Activated CD4-positive, alpha-beta T cell treated with anti-CD3 and anti-CD28 coated beads for 36 hours (primary cell): ENCODE measurements at regions of chr1 and their contacts with region 1.

Region 1: DNA sequence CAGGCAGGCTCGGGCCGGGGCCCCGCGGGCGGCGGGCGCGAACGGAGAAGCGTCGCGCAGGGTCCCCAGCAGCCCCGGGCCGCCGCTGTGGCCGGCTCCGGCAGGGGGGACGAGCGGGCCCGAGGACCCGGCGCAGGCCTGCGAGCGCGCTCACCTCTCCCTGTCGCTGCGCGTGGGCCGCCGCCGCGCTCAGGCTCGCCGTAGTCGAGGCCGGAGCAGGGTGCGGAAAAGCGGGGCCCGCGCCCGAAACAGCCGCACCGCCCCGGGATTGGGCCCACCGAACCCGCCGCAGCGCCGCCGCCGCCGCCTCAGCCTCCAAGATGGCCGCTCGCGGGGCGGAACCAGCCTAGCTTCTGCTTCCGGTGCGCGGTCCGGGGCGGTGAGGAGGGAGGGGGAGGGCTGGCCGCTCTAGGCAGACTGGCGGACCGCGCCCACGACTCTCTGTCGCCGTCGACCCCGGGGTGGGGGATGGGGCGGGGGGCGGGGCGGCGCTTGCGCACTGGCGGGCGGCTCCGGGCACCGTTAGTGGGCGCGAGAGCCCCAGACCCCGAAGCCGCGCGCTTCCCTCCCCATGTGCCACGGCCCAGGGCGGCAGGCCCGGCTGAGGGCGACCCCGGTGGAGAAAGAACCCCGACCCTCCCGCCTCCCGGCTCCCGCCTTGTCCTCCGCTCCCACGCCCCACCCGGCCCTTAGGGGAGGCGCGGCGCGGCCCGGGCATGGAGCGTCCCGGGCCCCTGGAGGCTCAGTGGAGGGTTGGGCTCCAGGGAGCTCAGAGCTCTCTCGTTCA is at the start of gene UBE2J2:
- DNase-seq: peak; percentile 97
- ATAC-seq: peak; percentile 94
- H3K4me3 Mint-ChIP-seq: peak within 1 kb of the TSS; percentile 85
- H3K27ac Mint-ChIP-seq: peak within 1 kb of the TSS; percentile 83
- H3K4me1 Mint-ChIP-seq: peaks cover 36% of the 10 kb centered on the region
- H3K27me3 Mint-ChIP-seq: no peaks in the 10 kb centered on the region
- total RNA-seq, gene UBE2J2: 57.4 to 60.2 TPM

Region 2: GRCh38 chr1:1033009-1033587 is 240.6 kb before region 1 on chr1:
- CTCF ChIA-PET with region 1: no interaction called
- POLR2A ChIA-PET with region 1: no interaction called
- intact Hi-C with region 1: loop called in 1 of 2 experiments (anchors 1 kb)
- DNase-seq: peak; percentile 97
- ATAC-seq: peak; percentile 95
- H3K4me3 Mint-ChIP-seq: peak overlapping the region; percentile 33
- H3K27ac Mint-ChIP-seq: no peak overlapping the region
- H3K4me1 Mint-ChIP-seq: peaks cover 5% of the 10 kb centered on the region
- H3K27me3 Mint-ChIP-seq: peaks cover 18% of the 10 kb centered on the region

Region 3: DNA sequence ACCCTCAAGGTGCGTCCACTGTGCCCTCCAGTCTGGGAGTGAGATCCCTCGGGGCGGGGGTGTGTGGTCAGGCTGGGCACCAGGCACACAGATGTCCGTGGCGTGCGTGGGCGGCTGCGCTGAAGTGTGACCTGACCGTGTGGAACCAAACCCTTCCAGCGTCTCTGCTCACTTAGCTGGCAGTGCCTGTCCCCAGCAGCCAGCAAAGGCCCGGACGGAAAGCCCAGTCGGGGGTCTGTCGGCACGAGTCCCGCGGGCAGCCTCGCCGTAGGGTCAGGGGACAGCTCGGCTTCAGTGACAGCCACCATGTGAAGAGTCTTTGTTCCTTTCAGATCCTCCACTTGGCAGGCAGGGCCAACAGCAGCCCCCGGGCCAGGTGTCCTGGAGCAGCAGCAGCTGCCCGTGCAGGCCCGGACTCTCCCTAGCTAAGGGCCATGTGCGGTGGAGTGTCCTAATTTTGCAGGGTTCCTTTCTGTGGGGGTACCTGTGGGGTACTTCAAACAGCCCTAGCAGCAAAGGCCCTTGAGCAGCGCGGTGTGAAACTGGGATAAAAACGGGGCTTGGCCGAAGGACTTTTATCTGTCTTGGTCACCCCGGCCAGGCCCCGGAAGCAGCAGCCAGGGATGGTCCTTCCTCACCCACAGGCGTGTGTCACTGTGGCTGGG is 88.5 kb before region 1 on chr1:
- CTCF ChIA-PET with region 1: no interaction called
- POLR2A ChIA-PET with region 1: no interaction called
- intact Hi-C with region 1: no loop called
- DNase-seq: no peak
- ATAC-seq: no peak
- H3K4me3 Mint-ChIP-seq: no peak overlapping the region
- H3K27ac Mint-ChIP-seq: no peak overlapping the region
- H3K4me1 Mint-ChIP-seq: no peaks in the 10 kb centered on the region
- H3K27me3 Mint-ChIP-seq: peaks cover 2% of the 10 kb centered on the region

Region 4: GRCh38 chr1:1217621-1218523 is 55.8 kb before region 1 on chr1:
- CTCF ChIA-PET with region 1: no interaction called
- POLR2A ChIA-PET with region 1: interaction called, 4 read pairs
- intact Hi-C with region 1: loop called in 1 of 2 experiments (anchors 5 kb)
- DNase-seq: peak; percentile 77
- ATAC-seq: peak; percentile 4
- H3K4me3 Mint-ChIP-seq: peak overlapping the region; percentile 66
- H3K27ac Mint-ChIP-seq: peak overlapping the region; percentile 92
- H3K4me1 Mint-ChIP-seq: peaks cover 49% of the 10 kb centered on the region
- H3K27me3 Mint-ChIP-seq: no peaks in the 10 kb centered on the region

Region 5: DNA sequence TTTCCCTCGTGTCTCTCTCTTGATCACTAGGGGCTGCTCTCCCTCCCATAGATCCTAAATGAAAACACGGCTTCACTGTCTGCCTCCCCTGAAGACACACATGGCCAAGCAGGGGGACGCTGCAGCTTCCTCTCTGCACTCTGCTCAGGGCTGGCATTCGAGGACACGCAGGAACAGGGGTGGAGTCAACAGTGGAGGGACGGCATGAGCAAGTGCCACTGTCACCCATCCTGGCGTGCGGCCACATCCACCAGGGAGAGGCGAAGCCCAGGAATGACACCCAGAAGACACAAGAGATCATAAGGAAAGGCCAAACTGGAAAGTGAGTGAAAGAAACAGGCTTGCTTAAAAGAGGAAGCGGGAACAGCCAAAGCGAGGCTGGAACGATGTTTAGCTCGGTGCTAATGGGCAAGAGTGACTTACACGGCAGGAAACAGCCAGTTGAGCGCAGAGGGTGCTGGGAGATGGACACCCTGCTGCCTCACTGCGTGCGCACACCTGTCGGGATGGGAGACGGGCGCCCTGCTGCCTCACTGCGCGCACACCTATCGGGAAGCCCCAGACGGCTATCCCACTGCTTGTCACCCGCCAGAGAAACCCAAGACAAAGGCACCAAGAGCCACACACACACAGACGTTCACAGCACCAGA is 13.6 kb before region 1 on chr1:
- CTCF ChIA-PET with region 1: no interaction called
- POLR2A ChIA-PET with region 1: no interaction called
- intact Hi-C with region 1: no loop called
- DNase-seq: no peak
- ATAC-seq: no peak
- H3K4me3 Mint-ChIP-seq: no peak overlapping the region
- H3K27ac Mint-ChIP-seq: peak overlapping the region; percentile 29
- H3K4me1 Mint-ChIP-seq: no peaks in the 10 kb centered on the region
- H3K27me3 Mint-ChIP-seq: no peaks in the 10 kb centered on the region

Region 6: DNA sequence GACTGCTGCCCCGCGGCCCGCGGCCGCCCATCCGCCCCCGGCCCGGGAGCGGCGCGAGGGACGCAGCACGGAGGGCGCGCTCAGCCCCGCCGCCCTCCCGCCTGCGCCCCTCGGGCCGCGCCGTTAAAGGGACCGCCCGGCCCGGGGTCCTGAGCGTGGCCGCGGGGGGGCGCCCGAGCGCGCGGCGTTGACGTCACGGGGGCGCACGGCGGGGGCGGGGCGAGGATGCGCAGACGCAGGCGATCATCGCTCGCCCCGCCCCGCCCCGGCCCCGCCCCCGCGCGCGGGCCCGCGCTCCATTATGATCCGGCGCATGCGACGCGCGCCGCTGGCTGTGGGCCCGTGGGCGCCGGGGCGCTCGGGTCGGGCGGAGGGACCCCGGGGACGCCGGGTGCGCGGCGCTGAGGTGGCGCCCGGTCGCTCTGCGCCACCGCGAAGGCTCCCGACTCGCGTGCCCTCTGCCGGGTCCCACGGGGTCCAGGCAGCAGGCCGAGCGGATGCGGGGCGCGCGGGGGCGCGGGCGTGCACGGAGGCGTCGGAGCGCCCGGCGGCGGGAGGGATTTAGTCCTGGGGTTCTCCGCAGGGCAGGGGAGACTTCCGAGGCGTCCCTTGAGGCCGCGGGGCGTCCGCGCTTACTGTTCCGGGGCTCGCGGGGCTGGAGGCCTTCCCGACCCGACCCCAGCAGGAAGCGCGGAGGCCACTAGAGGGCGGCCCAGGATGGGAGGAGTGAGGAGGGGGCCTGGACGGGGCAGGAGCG is 75.7 kb after region 1 on chr1 and contains the start of gene DVL1:
- CTCF ChIA-PET with region 1: no interaction called
- POLR2A ChIA-PET with region 1: no interaction called
- intact Hi-C with region 1: loop called in 1 of 2 experiments (anchors 2 kb)
- DNase-seq: peak; percentile 81
- ATAC-seq: peak; percentile 71
- H3K4me3 Mint-ChIP-seq: peak within 1 kb of the TSS; percentile 74
- H3K27ac Mint-ChIP-seq: no peak within 1 kb of the TSS
- H3K4me1 Mint-ChIP-seq: peaks cover 25% of the 10 kb centered on the region
- H3K27me3 Mint-ChIP-seq: peaks cover 11% of the 10 kb centered on the region
- total RNA-seq, gene DVL1: 35.3 to 35.5 TPM

Region 7: GRCh38 chr1:1406817-1407635 is 133.3 kb after region 1 on chr1 and contains the start of gene MRPL20:
- CTCF ChIA-PET with region 1: no interaction called
- POLR2A ChIA-PET with region 1: no interaction called
- intact Hi-C with region 1: loop called in 1 of 2 experiments (anchors 1 kb)
- DNase-seq: peak; percentile 98
- ATAC-seq: peak; percentile 95
- H3K4me3 Mint-ChIP-seq: peak within 1 kb of the TSS; percentile 92
- H3K27ac Mint-ChIP-seq: peak within 1 kb of the TSS; percentile 91
- H3K4me1 Mint-ChIP-seq: peaks cover 41% of the 10 kb centered on the region
- H3K27me3 Mint-ChIP-seq: no peaks in the 10 kb centered on the region
- total RNA-seq, gene MRPL20: 126 to 143 TPM

Region 8: GRCh38 chr1:1966071-1966740 is 692.5 kb after region 1 on chr1:
- CTCF ChIA-PET with region 1: no interaction called
- POLR2A ChIA-PET with region 1: no interaction called
- intact Hi-C with region 1: no loop called
- DNase-seq: no peak
- ATAC-seq: no peak
- H3K4me3 Mint-ChIP-seq: no peak overlapping the region
- H3K27ac Mint-ChIP-seq: no peak overlapping the region
- H3K4me1 Mint-ChIP-seq: no peaks in the 10 kb centered on the region
- H3K27me3 Mint-ChIP-seq: peaks cover 3% of the 10 kb centered on the region